Esophagus muscularis mucosa (tissue), 4 donors: ENCODE measurements at regions of chr3 and their contacts with region 1.

Region 1: GRCh38 chr3:160413613-160414248 is 14.3 kb downstream of the SMC4 start:
- DNase-seq: no peak
- H3K4me3 ChIP-seq: no peak overlapping the region
- H3K27ac ChIP-seq: no peak overlapping the region
- H3K4me1 ChIP-seq: no peaks in the 10 kb centered on the region
- H3K27me3 ChIP-seq: no peaks in the 10 kb centered on the region
- CTCF ChIP-seq: peak; percentile 73 to 88 (median 84)
- EP300 ChIP-seq: no peak
- POLR2A ChIP-seq: no peak

Region 2: GRCh38 chr3:160027541-160028195 is 386.1 kb before region 1 on chr3:
- intact Hi-C with region 1: loop called (anchors 2 kb)
- DNase-seq: no peak
- H3K4me3 ChIP-seq: no peak overlapping the region
- H3K27ac ChIP-seq: no peak overlapping the region
- H3K4me1 ChIP-seq: no peaks in the 10 kb centered on the region
- H3K27me3 ChIP-seq: no peaks in the 10 kb centered on the region
- CTCF ChIP-seq: no peak
- EP300 ChIP-seq: no peak
- POLR2A ChIP-seq: no peak

Region 3: GRCh38 chr3:160163229-160163878 is 250.4 kb before region 1 on chr3:
- intact Hi-C with region 1: loop called (anchors 10 kb)
- DNase-seq: peak; percentile 14
- H3K4me3 ChIP-seq: no peak overlapping the region
- H3K27ac ChIP-seq: no peak overlapping the region
- H3K4me1 ChIP-seq: no peaks in the 10 kb centered on the region
- H3K27me3 ChIP-seq: no peaks in the 10 kb centered on the region
- CTCF ChIP-seq: peak; percentile 24 to 34 (median 31)
- EP300 ChIP-seq: no peak
- POLR2A ChIP-seq: no peak